AG04450 (cell line): ENCODE measurements at regions of chr2 and their contacts with region 1.

Region 1: GRCh38 chr2:209960676-209961630 is 41.5 kb upstream of the RPE start:
- DNase-seq: no peak
- H3K4me3 ChIP-seq: no peak overlapping the region
- H3K27ac ChIP-seq: no peak overlapping the region
- H3K27me3 ChIP-seq: no peaks in the 10 kb centered on the region
- CTCF ChIP-seq: peak; percentile 70

Region 2: GRCh38 chr2:209900638-209901037 is 60.3 kb before region 1 on chr2:
- CTCF ChIA-PET with region 1: no interaction called
- POLR2A ChIA-PET with region 1: no interaction called
- DNase-seq: no peak
- H3K4me3 ChIP-seq: no peak overlapping the region
- H3K27ac ChIP-seq: no peak overlapping the region
- H3K27me3 ChIP-seq: no peaks in the 10 kb centered on the region
- CTCF ChIP-seq: no peak

Region 3: GRCh38 chr2:209946539-209946938 is 14.4 kb before region 1 on chr2:
- CTCF ChIA-PET with region 1: interaction called, 16 read pairs
- POLR2A ChIA-PET with region 1: no interaction called
- DNase-seq: no peak
- H3K4me3 ChIP-seq: no peak overlapping the region
- H3K27ac ChIP-seq: no peak overlapping the region
- H3K27me3 ChIP-seq: no peaks in the 10 kb centered on the region
- CTCF ChIP-seq: no peak